Dorsolateral prefrontal cortex (tissue), 120 donors: ENCODE measurements at regions of chr15 and their contacts with region 1.

Region 1: DNA sequence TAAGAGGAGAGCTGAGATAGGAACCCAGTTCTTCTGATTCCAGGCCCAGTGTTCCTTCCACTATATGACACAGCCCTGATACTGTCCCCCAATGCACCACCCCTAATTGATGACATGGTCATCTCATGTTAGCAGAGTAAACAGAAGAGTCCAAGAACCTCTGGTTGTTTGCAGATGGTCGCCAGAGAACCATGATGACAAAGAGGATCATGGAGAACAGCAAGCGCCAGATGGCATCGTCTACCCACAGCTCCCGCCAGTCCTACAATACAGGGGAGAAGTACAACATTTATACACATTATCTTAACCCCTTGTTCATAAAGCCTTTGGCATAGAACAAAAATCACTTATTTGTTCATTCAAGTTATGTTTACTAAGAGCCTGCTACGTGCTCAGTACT is 18.5 kb upstream of the VPS39 start:
- DNase-seq: peak in 7 of 10 donors; percentile 27 to 67 (median 40)
- H3K4me3 ChIP-seq: no peak overlapping the region
- H3K27ac ChIP-seq: peak overlapping the region in 45 of 59 donors; percentile 1 to 86 (median 49)
- H3K27me3 ChIP-seq: no peaks in the 10 kb centered on the region
- CTCF ChIP-seq: peak in 51 of 56 donors; percentile 13 to 74 (median 46)

Region 2: GRCh38 chr15:42385206-42385979 is 158.7 kb after region 1 on chr15:
- intact Hi-C with region 1: loop called in 1 of 2 experiments (anchors 10 kb)
- DNase-seq: peak in 1 of 10 donors; percentile 44
- H3K4me3 ChIP-seq: no peak overlapping the region
- H3K27ac ChIP-seq: peak overlapping the region in 28 of 59 donors; percentile 11 to 85 (median 67)
- H3K27me3 ChIP-seq: no peaks in the 10 kb centered on the region
- CTCF ChIP-seq: peak in 51 of 56 donors; percentile 21 to 65 (median 53)

Region 3: GRCh38 chr15:42401544-42402454 is 175.2 kb after region 1 on chr15:
- intact Hi-C with region 1: loop called in 1 of 2 experiments (anchors 5 kb)
- DNase-seq: no peak
- H3K4me3 ChIP-seq: no peak overlapping the region
- H3K27ac ChIP-seq: peak overlapping the region in 50 of 59 donors; percentile 19 to 100 (median 96)
- H3K27me3 ChIP-seq: no peaks in the 10 kb centered on the region
- CTCF ChIP-seq: no peak

Region 4: GRCh38 chr15:42474827-42475226 is 248.2 kb after region 1 on chr15:
- intact Hi-C with region 1: loop called (anchors 5 to 10 kb)
- DNase-seq: no peak
- H3K4me3 ChIP-seq: no peak overlapping the region
- H3K27ac ChIP-seq: peak overlapping the region in 12 of 59 donors; percentile 1 to 52 (median 14)
- H3K27me3 ChIP-seq: no peaks in the 10 kb centered on the region
- CTCF ChIP-seq: no peak